ENCODE measurements at regions of chr16 and their contacts with region 1.

Region 1: DNA sequence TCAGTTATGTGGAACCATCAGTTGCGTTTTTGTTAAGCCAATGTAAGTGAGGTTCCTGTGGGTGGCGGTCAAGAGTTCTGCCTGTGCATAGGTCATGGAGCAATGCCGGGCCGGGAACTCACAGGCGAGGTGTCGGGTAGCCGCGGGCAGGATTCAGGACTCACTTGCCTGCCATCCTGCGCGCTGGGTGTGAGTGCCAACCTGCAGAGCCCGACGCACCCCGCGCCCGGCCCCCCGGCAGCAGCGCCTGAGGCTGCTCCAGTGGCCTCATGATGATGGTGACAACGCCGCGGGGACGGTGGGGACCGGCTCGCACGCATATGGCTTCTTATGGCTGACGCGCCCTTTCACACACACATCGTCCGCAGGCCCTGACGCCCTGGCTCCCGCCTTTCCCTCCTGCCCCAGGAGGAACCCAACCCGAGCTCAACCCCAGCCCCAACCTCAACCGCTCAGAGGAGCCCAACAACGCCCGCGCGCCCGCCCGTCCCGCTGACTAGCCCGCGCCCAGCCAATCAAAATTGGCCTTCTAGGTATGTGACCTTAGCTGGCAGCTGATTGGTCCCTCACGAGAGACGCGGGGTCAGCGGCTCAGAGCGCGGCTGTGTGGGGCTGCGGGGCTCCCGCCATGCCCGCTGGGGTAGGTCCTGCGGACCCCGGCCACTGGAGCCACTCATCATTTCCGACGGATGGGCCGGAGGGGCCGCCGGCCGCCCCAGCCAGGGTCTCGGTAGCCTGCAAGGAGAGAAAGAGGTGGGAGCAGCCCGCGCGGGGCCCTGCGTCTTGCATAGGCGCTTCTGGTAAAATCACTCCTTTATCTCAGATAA is at the start of gene C16orf95:
- DNase-seq: peak; percentile 96 to 97
- H3K4me3 ChIP-seq: peak within 1 kb of the TSS; percentile 97
- H3K27ac ChIP-seq: peak within 1 kb of the TSS; percentile 94 to 96
- H3K4me1 ChIP-seq: peaks cover 0 to 7% of the 10 kb centered on the region in 2 donors
- H3K27me3 ChIP-seq: no peaks in the 10 kb centered on the region
- CTCF ChIP-seq: peak; percentile 54 to 69 (median 64)
- POLR2A ChIP-seq: peak; percentile 88 to 94
- total RNA-seq, gene C16orf95: 3.2 to 4.2 TPM in 2 of 4 donors, not detected in the others

Region 2: DNA sequence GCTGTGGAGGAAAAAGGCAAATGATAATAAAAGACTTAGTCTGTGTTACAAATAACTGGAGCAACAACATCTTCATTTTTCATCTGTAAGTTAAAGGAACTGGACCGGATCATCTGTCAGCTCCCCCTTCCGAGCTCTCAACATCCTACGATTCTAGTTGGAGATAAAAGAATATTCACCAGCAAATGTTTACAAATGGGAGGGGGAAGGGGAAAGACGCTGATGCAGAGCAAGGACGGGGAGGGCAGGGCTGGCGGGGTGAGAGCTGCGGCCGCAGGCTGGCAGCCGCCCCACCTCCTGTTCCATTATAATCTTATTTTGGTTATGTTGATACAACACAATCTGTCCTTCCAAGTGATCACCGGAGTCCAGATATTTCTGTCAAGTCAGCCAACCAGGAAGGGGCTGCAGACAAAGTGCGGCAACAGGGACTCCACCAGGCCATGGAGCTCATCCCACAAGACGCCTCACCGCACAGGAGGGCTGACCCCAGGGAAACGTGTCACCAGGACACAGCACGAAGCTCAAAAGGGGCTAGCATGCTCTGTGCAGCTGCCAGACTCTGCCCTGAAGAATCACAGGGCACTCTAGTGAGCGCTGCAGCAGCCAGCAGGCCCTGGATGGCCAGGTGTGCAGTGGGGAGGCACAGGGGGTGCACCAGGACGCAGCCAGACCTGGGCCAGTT is 46.8 kb after region 1 on chr16:
- intact Hi-C with region 1: loop called (anchors 10 kb)
- DNase-seq: peak in 1 of 2 donors; percentile 57
- H3K4me3 ChIP-seq: no peak overlapping the region
- H3K27ac ChIP-seq: peak overlapping the region; percentile 41 to 78
- H3K4me1 ChIP-seq: peaks cover 6 to 9% of the 10 kb centered on the region in 2 donors
- H3K27me3 ChIP-seq: no peaks in the 10 kb centered on the region
- CTCF ChIP-seq: no peak
- POLR2A ChIP-seq: no peak

Region 3: DNA sequence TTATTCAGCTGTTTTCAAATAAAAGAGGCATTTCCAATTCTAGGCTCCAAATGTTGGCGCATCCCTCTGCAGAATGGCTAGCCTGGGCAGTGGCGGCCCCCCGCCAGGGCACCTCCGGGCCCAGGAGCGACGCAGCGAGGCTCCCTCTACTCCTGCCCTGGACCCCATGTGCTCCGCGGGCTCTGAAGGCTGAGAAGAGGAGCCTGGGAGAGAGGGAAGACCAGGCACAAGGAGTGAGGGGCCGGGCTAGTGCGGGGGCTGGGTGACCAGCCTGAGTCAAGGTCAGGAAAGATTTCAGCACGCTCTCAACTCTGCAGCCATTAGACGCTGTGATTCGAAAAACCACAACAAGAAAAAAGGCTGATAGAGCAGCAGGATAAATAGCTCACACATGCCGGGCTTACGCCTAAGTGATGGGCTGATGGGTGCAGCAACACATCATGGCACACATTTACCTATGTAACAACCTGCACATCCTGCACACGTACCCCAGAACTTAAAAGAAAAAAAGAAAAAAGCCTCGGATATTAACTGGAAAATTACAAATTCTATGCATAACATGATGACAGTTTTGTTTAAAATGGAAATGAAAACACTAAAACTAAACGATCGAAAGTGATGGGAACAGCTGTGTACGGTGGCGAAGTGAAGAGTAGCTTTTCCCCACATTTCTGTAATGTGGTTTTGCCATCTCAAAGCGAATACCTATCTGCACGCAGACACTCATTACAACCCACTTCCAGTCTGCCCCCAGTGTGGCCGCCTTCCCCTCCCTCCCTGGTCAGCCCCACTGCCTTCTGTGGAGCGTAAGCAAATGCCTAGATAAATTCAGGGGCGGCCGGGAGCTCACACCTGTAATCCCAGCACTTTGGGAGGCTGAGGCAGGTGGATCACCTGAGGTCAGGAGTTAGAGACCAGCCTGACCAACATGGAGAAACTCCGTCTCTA is 119.4 kb after region 1 on chr16:
- intact Hi-C with region 1: no loop called
- DNase-seq: no peak
- H3K4me3 ChIP-seq: peak overlapping the region in 1 of 2 donors; percentile 4
- H3K27ac ChIP-seq: peak overlapping the region; percentile 68 to 70
- H3K4me1 ChIP-seq: peaks cover 0 to 4% of the 10 kb centered on the region in 2 donors
- H3K27me3 ChIP-seq: no peaks in the 10 kb centered on the region
- CTCF ChIP-seq: no peak
- POLR2A ChIP-seq: no peak

Measured in uterus (tissue), 4 donors.